Activated naive CD4-positive, alpha-beta T cell treated with anti-CD3 and anti-CD28 coated beads, Interleukin-2, amount 10 ng/mL, durations not matched to agents 7 days and 5 days (primary cell): ENCODE measurements at regions of chr3 and their contacts with region 1.

Region 1: DNA sequence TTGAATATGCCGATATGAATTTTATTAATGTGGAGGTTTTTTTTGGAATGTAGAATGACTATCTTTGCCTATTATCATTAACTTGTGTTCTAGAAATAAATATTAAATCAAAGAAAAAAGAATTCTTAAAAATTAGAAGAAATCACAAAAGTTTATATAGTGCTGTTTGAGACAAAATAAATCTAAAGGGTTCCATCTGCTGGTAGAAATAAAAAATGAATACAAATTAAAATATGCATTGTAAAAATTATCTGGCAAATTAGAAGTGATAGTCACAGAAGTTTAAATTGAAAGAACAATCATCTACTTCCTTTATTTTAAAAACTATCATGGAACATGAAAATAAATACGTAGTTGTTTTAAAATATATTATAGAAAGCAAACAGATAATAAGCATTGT is 22.7 kb upstream of the ZBTB20 start:
- DNase-seq: no peak
- H3K4me3 Mint-ChIP-seq: no peak overlapping the region
- H3K27ac Mint-ChIP-seq: no peak overlapping the region
- H3K4me1 Mint-ChIP-seq: peaks cover 12% of the 10 kb centered on the region
- H3K27me3 Mint-ChIP-seq: peaks cover 3% of the 10 kb centered on the region

Region 2: DNA sequence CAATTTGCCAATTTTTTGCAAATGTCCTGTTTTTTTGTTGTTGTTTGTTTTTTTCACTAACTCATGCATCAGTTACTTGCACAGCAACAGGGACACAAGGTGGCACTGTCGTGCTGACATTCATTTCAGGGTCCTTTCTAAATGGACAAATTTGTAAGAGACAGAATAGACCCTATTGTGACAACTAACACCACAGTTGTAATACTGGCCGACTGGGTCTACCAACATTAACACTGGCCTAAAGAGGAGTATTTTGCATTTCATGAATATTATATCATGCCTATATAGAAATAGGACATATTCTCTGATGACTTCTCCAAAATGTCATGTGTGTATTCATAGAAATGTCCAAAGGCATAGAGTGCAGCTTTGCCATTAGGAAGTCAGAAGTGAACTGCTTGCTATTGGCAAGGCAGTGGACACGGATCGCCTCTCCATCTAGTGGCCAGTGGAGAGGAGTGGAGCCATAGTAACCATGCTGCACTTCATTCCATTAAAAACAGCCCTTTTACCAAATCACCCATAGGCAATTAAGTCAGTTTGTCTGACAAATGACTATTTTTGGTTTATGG is 77.5 kb before region 1 on chr3:
- CTCF ChIA-PET with region 1: interaction called, 53 read pairs
- DNase-seq: peak; percentile 75
- H3K4me3 Mint-ChIP-seq: no peak overlapping the region
- H3K27ac Mint-ChIP-seq: no peak overlapping the region
- H3K4me1 Mint-ChIP-seq: no peaks in the 10 kb centered on the region
- H3K27me3 Mint-ChIP-seq: no peaks in the 10 kb centered on the region

Region 3: DNA sequence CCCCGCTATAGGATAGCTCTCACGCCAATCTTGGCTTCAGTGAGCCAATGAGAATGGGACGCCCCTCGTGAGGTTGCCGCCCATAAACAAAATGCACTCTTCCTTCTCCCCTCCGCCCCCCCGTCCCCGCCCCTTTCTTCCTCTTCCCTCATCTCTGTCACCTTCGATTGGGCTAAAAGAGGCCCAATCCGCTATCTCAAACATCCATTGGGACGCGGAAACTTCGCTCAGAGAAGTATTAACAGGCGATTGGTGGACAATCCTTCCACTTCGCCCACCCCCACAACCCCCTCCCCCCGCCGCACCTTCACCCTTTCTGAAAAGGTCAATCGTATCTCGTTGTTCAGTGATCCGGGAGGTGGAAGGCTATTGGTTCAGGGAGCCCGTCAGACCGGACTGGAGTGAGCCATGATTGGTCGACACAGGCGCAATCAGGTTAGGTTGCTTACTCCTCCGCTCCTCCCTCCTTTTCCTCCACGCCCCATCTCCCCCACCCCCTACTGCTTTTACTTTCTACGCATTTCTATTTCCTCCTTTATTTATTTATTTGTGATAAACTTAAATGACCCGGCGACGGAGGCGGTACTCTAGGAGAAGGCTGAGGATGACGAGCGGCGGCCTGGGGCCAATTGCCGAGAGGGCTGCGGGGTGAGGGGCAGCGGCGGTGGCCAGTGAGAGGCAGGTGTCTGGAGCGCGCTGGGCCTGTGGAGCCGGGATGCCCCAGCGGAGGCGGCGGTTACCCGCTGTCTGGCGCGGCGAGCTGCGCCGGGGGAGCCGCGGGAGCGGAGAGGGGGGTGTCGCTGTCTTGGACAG is 22.3 kb before region 1 on chr3:
- CTCF ChIA-PET with region 1: interaction called, 17 read pairs
- DNase-seq: peak; percentile 98
- H3K4me3 Mint-ChIP-seq: peak overlapping the region; percentile 86
- H3K27ac Mint-ChIP-seq: peak overlapping the region; percentile 98
- H3K4me1 Mint-ChIP-seq: peaks cover 22% of the 10 kb centered on the region
- H3K27me3 Mint-ChIP-seq: no peaks in the 10 kb centered on the region

Region 4: GRCh38 chr3:115469649-115470048 is 299.8 kb after region 1 on chr3:
- CTCF ChIA-PET with region 1: no interaction called
- DNase-seq: no peak
- H3K4me3 Mint-ChIP-seq: no peak overlapping the region
- H3K27ac Mint-ChIP-seq: no peak overlapping the region
- H3K4me1 Mint-ChIP-seq: no peaks in the 10 kb centered on the region
- H3K27me3 Mint-ChIP-seq: no peaks in the 10 kb centered on the region